Adrenal gland (tissue), 19 donors: ENCODE measurements at regions of chr5 and their contacts with region 1.

Region 1: DNA sequence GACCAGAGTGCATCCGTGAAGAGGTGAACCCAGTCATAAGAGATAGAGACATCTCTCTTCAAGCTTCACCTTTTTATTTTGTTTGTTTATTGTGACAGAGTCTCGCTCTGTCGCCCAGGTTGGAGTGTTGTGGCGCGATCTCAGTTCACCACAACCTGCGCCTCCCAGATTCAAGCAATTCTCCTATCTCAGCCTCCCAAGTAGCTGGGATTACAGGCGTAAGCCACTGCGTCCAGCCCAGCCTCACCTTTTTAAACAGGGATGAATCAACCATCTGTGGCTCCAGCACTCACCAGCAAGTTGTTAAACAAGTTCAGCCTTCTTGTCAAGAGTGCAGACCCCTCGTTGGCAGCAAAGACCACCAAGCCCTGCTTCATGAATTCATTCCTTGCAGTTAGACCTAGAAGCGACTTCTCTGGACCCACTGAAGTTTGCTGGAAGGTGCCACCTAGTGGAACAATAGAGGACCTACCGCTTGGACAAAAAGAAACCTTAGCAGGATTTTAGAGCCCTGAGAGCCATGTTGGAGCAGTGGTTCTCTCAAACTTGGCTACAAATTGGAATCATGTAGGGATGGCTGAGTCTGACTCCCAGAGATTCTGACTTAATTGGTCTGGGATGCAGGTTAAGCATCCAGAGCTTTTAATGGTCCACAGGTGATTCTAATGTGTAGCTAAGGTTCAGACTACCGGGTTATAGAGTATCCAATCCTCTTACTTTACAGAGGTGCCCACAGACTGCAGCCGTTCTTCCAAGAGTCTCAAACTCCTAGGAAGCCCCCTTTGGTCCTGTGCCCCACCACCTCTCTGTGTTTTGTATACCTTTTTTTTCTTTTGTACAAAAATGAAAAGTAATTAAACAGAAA is 10.5 kb upstream of the GALNT10 start:
- DNase-seq: peak; percentile 31 to 70 (median 48)
- H3K4me3 ChIP-seq: no peak overlapping the region
- H3K27ac ChIP-seq: no peak overlapping the region
- H3K4me1 ChIP-seq: no peaks in the 10 kb centered on the region
- H3K27me3 ChIP-seq: no peaks in the 10 kb centered on the region
- CTCF ChIP-seq: peak; percentile 74 to 81 (median 78)
- POLR2A ChIP-seq: no peak

Region 2: DNA sequence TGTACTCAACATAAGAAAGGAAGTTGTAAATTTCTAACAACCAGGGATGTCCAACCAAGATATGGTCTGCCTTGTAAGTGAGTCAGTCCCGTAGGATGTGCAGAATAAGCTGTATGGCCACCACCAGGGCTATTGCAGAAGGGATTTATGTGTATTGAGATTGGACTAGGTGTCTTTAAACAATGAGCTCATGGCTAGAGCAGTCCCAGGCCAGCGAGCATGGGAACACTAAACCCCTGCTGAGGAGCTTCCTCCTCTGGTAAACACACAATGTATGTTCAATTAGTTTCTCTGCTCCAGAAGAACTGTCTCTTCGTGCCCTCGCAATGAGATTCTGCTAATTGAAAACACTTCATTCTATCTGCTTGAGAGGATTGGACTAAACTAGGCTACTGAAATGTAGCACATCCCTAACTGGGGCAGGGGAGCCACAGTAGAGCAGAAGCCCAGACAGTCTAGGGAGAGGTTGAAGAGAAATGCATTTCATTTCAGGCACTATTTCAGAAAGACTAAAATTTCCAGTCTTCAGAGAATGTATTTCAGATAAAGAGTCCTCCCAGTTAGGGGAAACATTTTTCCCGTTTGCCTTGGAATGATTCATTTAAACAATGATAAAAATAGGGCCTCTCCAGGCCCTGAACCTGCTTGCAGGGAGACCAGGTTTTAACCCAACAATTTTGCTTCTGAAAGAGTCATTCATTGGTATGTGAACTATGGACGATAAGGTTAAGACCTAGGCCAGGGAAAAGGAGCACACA is 296.0 kb before region 1 on chr5:
- intact Hi-C with region 1: no loop called
- DNase-seq: no peak
- H3K4me3 ChIP-seq: no peak overlapping the region
- H3K27ac ChIP-seq: no peak overlapping the region
- H3K4me1 ChIP-seq: no peaks in the 10 kb centered on the region
- H3K27me3 ChIP-seq: no peaks in the 10 kb centered on the region
- CTCF ChIP-seq: no peak
- POLR2A ChIP-seq: no peak

Region 3: DNA sequence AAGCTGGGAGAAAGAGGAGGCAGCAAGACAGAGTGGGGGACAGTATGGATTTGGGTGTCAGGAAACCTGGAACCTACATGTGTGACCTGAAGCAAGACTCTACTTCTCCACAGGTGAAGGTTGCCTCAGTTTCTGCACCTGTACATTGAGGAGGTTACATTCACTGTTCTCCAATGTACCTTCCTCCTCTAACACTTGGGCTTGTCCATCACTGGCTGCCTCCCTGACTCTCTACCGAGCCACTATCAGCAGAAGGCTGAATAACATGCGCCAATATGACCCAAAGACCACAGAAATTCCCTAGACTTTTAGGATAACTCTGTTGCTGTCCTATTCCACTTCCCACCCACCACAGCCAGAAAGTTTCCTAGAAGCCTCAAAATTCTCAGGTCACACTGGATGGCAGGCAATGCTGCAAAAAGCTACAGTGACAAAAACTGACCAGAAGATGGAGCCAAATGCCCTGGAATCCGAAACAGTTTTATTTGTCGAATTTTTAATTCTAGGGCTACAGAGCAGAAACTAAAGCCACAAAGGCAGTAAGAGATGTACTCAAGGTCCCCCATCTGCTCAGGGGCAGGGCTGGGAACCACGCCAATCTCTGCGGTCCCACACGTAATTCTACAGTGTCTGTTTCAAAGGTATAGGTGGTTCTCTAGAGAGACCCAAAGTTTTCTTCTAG is 205.8 kb before region 1 on chr5:
- intact Hi-C with region 1: loop called (anchors 10 kb)
- DNase-seq: peak in 6 of 7 donors; percentile 20 to 45 (median 32)
- H3K4me3 ChIP-seq: no peak overlapping the region
- H3K27ac ChIP-seq: no peak overlapping the region
- H3K4me1 ChIP-seq: no peaks in the 10 kb centered on the region
- H3K27me3 ChIP-seq: peaks cover 6% of the 10 kb centered on the region
- CTCF ChIP-seq: peak; percentile 43 to 78 (median 70)
- POLR2A ChIP-seq: no peak

Region 4: GRCh38 chr5:154065971-154066370 is 114.1 kb before region 1 on chr5:
- intact Hi-C with region 1: loop called (anchors 5 kb)
- DNase-seq: no peak
- H3K4me3 ChIP-seq: no peak overlapping the region
- H3K27ac ChIP-seq: no peak overlapping the region
- H3K4me1 ChIP-seq: no peaks in the 10 kb centered on the region
- H3K27me3 ChIP-seq: no peaks in the 10 kb centered on the region
- CTCF ChIP-seq: no peak
- POLR2A ChIP-seq: no peak

Region 5: GRCh38 chr5:154072414-154073171 is 107.5 kb before region 1 on chr5:
- intact Hi-C with region 1: loop called (anchors 5 kb)
- DNase-seq: peak; percentile 68 to 92 (median 84)
- H3K4me3 ChIP-seq: no peak overlapping the region
- H3K27ac ChIP-seq: no peak overlapping the region
- H3K4me1 ChIP-seq: peaks cover 6 to 8% of the 10 kb centered on the region in 2 donors
- H3K27me3 ChIP-seq: no peaks in the 10 kb centered on the region
- CTCF ChIP-seq: peak; percentile 86 to 98 (median 95)
- POLR2A ChIP-seq: no peak

Region 6: GRCh38 chr5:154405078-154405792 is 225.2 kb after region 1 on chr5:
- intact Hi-C with region 1: loop called in 1 of 2 experiments (anchors 5 kb)
- DNase-seq: peak; percentile 74 to 88 (median 84)
- H3K4me3 ChIP-seq: peak overlapping the region in 1 of 4 donors; percentile 44
- H3K27ac ChIP-seq: no peak overlapping the region
- H3K4me1 ChIP-seq: peaks cover 0 to 9% of the 10 kb centered on the region in 2 donors
- H3K27me3 ChIP-seq: no peaks in the 10 kb centered on the region
- CTCF ChIP-seq: peak; percentile 72 to 95 (median 88)
- POLR2A ChIP-seq: no peak